A549 (cell line): ENCODE measurements at regions of chr18 and their contacts with region 1.

Region 1: DNA sequence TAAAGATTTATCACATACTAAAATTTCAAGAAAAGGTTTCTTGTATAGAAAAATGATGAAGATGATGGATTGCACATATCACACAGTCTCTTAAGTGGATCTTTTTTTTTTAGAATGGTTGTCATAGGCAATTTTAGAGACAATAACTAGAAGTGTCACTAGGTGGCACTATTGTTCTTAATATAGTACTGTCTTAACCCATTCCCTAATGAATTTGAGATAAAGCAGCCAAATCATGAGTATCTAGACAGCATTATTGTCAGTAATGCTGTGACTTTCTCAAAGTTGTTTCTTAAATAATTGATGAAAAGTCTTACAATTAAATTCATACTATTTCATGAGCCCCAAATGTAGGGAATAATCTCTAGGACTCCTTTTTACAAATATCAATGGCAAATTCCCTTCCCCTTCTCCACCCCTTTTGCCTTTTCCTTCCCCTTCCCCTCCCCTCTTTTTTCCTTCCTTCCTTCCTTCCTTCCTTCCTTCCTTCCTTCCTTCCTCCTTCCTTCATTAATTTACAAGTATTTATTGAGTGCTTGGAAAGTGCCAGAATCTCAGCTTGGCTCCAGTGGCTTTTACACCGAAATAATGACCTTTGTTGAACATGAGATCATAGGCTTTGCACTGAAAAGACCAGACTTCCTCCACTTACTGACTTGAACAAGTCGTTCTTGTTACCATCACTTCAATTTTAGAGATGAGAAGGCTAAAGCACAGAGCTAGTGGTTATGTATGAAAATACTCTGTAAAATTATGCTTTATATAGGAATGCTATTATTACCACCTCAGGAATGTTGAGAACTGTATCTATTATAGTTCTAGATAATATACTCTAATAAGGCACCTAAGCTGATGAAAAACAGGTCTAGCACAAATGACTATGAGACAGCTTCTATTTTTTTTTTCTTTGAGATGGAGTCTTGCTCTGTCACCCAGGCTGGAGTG is 19.8 kb downstream of the MYL12B start:
- DNase-seq: peak; percentile 55 to 78
- ATAC-seq: peak; percentile 54 to 83; a peak in 4 of 6 replicates
- H3K4me3 ChIP-seq: no peak overlapping the region
- H3K27ac ChIP-seq: peak overlapping the region; percentile 86 to 89
- H3K4me1 ChIP-seq: peaks cover 13% of the 10 kb centered on the region
- CTCF ChIP-seq: peak; percentile 64
- EP300 ChIP-seq: no peak
- POLR2A ChIP-seq: no peak
- RAD21 ChIP-seq: peak; percentile 84 to 86

Region 2: DNA sequence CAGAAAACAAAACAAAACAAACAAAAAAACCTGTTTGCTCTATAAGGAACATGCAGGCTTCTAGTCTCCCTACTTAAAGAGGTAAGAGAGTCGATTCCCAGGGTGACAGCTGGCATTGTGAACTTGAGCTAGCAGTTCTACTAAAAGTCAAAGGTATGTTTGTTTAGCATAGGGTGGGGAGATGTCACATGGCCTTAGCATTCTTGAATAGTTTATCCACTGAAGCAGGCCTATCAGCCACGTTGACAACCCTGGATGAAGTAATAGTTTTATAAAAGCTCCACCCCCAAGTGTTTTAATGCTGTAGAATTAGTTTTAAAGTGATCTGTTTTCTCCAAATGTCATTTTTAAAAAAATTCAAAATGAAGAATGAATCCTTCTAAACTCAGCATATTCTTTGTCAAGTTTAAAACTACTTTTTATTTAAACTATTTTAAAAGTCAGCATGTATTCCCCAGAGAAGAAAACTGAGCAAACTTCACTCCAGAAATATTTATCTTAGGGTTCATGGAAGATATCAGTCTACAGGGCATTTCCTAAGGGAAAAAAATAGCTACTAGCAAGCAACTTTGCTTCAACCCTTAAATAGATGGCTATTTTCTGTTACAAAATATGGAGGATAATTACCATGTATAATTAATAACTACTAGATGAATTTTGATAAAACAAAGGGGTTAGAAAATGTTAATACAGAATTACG is 63.6 kb before region 1 on chr18:
- CTCF ChIA-PET with region 1: no interaction called
- POLR2A ChIA-PET with region 1: no interaction called
- DNase-seq: peak; percentile 55 to 83
- ATAC-seq: peak; percentile 70 to 93; a peak in 5 of 6 replicates
- H3K4me3 ChIP-seq: no peak overlapping the region
- H3K27ac ChIP-seq: peak overlapping the region; percentile 62 to 64; a peak in 5 of 6 replicates
- H3K4me1 ChIP-seq: peaks cover 23% of the 10 kb centered on the region
- CTCF ChIP-seq: no peak
- EP300 ChIP-seq: no peak
- POLR2A ChIP-seq: no peak
- RAD21 ChIP-seq: no peak

Region 3: GRCh38 chr18:3294435-3295080 is 12.8 kb after region 1 on chr18:
- CTCF ChIA-PET with region 1: interaction called, 10 read pairs
- POLR2A ChIA-PET with region 1: no interaction called
- DNase-seq: no peak
- ATAC-seq: no peak
- H3K4me3 ChIP-seq: no peak overlapping the region
- H3K27ac ChIP-seq: no peak overlapping the region
- H3K4me1 ChIP-seq: no peaks in the 10 kb centered on the region
- CTCF ChIP-seq: no peak
- EP300 ChIP-seq: no peak
- POLR2A ChIP-seq: no peak
- RAD21 ChIP-seq: no peak

Region 4: GRCh38 chr18:3340015-3340681 is 58.4 kb after region 1 on chr18:
- CTCF ChIA-PET with region 1: no interaction called
- POLR2A ChIA-PET with region 1: no interaction called
- DNase-seq: no peak
- ATAC-seq: no peak
- H3K4me3 ChIP-seq: no peak overlapping the region
- H3K27ac ChIP-seq: no peak overlapping the region
- H3K4me1 ChIP-seq: no peaks in the 10 kb centered on the region
- CTCF ChIP-seq: no peak
- EP300 ChIP-seq: no peak
- POLR2A ChIP-seq: no peak
- RAD21 ChIP-seq: no peak

Region 5: GRCh38 chr18:3585656-3586509 is 304.2 kb after region 1 on chr18:
- CTCF ChIA-PET with region 1: interaction called, 13 read pairs
- POLR2A ChIA-PET with region 1: no interaction called
- DNase-seq: peak; percentile 64 to 89
- ATAC-seq: peak; percentile 95 to 96
- H3K4me3 ChIP-seq: no peak overlapping the region
- H3K27ac ChIP-seq: peak overlapping the region; percentile 63 to 77
- H3K4me1 ChIP-seq: peaks cover 34% of the 10 kb centered on the region
- CTCF ChIP-seq: peak; percentile 55
- EP300 ChIP-seq: no peak
- POLR2A ChIP-seq: no peak
- RAD21 ChIP-seq: peak; percentile 70 to 76